ENCODE measurements at regions of chr9 and their contacts with region 1.

Region 1: DNA sequence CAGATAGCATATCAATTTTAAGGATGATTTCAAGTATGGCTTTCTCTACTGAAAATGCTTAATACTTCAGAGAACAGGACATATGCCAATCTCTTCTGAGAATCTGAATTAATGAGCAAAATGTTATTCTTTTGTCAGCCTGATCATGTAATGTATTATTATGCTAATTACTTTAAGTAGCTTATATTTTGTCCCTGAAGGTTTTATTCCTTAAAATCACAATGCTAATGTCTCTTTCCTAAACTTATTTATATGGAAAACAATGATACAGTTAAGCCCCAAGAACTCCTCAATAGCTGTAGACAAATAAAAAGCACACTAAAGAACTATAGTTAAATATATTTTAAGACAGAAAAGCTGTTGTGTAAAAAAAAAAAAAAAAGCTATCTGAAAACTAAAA is 256.9 kb upstream of the PTPRD start:
- DNase-seq: no peak
- ATAC-seq: no peak

Region 2: GRCh38 chr9:10704720-10705119 is 165.0 kb before region 1 on chr9:
- intact Hi-C with region 1: loop called (anchors 5 kb)
- DNase-seq: no peak
- ATAC-seq: no peak